GM12878 (cell line): ENCODE measurements at regions of chr4 and their contacts with region 1.

Region 1: DNA sequence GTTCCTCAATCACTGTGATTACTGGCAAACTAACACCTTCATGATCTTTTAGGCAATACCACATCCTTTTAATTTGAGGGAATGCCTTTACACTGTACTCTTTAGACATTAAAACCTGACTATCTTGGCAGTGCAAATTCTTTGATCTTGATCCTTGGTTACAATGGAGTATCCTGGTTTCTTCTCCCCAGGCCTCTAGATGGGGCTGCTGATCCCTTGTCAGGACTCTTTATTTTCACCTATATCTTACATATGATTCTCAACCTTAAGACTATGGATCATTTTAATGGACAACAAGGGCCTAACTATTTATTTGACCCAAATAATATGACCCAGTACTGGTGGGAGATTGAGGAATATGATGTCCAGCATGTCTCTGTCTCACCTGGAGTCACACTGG is 1005.5 kb upstream of the INTU start:
- DNase-seq: no peak
- ATAC-seq: peak; percentile 64; the same call in 2 of the 3 replicates
- H3K4me3 ChIP-seq: no peak overlapping the region
- H3K27ac ChIP-seq: no peak overlapping the region
- H3K4me1 ChIP-seq: no peaks in the 10 kb centered on the region
- H3K27me3 ChIP-seq: no peaks in the 10 kb centered on the region
- CTCF ChIP-seq: peak in 1 of 3 experiments; percentile 25; a peak in 1 of 6 replicates
- EP300 ChIP-seq: no peak
- POLR2A ChIP-seq: no peak
- RAD21 ChIP-seq: peak; percentile 36; the same call in 1 of the 2 replicates

Region 2: DNA sequence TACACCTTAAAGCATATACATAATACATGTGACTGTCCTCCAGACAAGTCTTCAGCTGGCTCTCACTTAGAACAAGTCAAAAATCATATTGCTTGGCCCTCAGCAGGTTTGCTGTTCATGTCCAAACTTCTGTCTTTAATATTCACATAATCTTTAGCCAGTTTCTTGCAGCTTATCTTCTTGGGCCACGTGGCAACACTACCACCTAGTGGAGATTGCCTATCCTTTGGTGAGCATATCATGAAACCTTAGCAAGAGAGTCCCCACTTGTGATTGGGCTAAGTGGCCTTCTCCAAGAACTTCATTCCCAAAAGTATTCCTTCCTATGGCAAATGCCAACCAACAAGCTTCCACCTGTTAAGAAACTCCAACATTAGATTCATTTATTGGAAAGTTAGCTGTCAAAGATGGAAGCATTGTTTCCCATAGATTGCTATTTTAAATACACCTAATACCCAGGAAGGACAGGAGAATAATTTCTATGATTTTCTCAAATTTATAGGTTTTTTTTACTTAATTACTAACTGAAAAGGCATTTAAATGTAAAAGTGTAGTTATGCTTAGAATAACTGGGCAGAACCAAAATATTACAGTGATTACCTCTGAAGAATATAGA is 773.6 kb after region 1 on chr4:
- CTCF ChIA-PET with region 1: interaction called, 3 read pairs
- POLR2A ChIA-PET with region 1: no interaction called
- RAD21 ChIA-PET with region 1: no interaction called
- SMC1A ChIA-PET with region 1: no interaction called
- in situ Hi-C with region 1: no loop called
- intact Hi-C with region 1: loop called (anchors 5 kb)
- DNase-seq: peak; percentile 9
- ATAC-seq: peak; percentile 88
- H3K4me3 ChIP-seq: no peak overlapping the region
- H3K27ac ChIP-seq: no peak overlapping the region
- H3K4me1 ChIP-seq: no peaks in the 10 kb centered on the region
- H3K27me3 ChIP-seq: no peaks in the 10 kb centered on the region
- CTCF ChIP-seq: peak; percentile 74 to 79 (median 76)
- EP300 ChIP-seq: no peak
- POLR2A ChIP-seq: no peak
- RAD21 ChIP-seq: peak; percentile 91